Ascending aorta (tissue), 2 donors: ENCODE measurements at regions of chr3 and their contacts with region 1.

Region 1: GRCh38 chr3:161220850-161221753 is at the start of gene NMD3:
- DNase-seq: peak; percentile 75 to 96
- H3K4me3 ChIP-seq: peak within 1 kb of the TSS; percentile 87 to 92
- H3K27ac ChIP-seq: peak within 1 kb of the TSS; percentile 93 to 95
- H3K4me1 ChIP-seq: peaks cover 0 to 9% of the 10 kb centered on the region in 2 donors
- H3K27me3 ChIP-seq: no peaks in the 10 kb centered on the region
- CTCF ChIP-seq: no peak
- total RNA-seq, gene NMD3: 34.1 TPM

Region 2: DNA sequence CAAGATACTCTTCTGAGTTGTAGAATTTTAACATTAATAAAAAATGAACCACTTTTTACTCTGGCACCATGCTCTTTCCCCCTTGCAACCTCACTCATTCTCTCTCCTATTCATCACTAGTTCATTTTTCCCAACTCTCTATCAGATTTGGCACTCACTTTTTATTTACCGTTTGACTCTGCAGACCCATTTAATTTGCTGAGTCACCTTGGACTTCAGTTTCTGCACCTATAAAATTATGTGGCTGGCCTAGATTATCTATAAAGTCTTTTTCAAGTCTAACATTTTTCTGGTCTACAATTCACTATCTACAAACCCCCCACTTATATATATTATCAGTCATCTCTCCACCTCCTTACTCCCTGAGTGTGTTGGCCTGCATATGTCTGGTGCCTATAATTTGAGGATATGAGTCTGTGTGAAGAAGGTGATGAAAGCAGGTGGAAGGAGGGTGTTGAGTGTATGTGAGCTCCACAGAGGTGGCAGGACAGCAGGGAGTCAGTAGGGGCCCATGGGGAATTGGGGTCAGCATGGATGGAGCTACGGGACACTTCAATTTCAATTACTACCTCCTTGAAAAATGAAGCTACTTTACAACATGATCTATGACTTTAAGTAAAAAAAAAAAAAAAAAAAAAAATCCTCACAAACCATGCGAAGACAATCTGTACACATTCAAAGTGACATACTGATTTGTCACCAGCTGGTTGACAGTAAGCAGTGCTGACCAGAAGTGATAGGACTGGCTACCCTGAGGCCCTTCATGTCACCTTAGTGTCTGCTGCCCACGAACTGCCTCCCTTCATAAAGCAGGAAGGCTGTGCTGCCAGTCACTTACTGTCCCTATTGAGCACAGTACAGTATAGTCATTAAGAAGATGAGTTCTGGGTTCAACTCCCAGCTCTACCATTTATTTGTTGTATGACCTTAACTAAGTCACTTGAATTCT is 1566.6 kb before region 1 on chr3:
- intact Hi-C with region 1: no loop called
- DNase-seq: no peak
- H3K4me3 ChIP-seq: no peak overlapping the region
- H3K27ac ChIP-seq: no peak overlapping the region
- H3K4me1 ChIP-seq: no peaks in the 10 kb centered on the region
- H3K27me3 ChIP-seq: no peaks in the 10 kb centered on the region
- CTCF ChIP-seq: no peak

Region 3: DNA sequence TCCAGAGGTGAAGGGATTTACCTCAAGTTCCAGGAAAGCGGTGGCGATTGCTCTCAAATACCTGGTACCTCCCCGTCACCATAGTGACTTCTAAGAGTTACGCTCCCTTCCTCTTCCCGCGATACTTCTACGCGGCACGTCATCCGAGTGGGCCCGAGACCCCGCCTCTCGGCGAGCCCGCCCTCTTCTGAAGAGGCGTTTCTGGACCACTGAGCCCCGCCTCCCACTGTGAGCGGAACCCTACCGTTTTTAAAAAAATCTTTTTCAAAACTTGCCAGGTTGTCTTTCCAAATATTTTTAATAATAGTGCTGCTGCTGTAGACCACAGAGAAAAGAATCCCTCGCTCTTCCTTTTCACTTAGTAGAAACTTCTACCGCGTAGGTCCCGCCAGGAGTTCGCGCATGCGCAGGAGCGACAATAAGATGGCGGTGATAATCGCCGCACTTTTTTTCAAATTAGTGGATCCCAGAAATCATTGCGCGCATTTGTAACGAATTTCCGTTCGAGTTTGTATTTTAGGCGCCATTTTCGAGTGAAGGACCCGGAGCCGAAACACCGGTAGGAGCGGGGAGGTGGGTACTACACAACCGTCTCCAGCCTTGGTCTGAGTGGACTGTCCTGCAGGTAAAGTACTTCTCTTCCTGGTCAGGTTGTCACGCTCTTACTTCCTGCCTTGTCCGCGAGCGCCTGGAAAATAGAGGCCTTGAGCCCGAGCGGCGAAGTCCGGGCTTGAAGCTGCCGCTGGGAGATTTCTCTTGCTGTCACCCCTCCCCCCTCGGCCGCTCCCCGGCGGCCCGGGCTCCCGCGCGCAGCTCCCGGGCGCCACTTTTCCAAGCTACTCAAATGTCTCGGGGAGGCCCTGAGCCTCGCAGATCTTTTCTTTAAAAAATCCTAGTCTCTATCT is 821.7 kb before region 1 on chr3 and contains the starts of genes IFT80 and SMC4:
- intact Hi-C with region 1: loop called (anchors 5 kb)
- DNase-seq: peak; percentile 79 to 98
- H3K4me3 ChIP-seq: peak within 1 kb of the TSS; percentile 64 to 73
- H3K27ac ChIP-seq: peak within 1 kb of the TSS; percentile 84 to 87
- H3K4me1 ChIP-seq: peaks cover 0 to 8% of the 10 kb centered on the region in 2 donors
- H3K27me3 ChIP-seq: no peaks in the 10 kb centered on the region
- CTCF ChIP-seq: no peak
- total RNA-seq, gene IFT80: 10.2 TPM
- total RNA-seq, gene SMC4: 5.0 TPM

Region 4: DNA sequence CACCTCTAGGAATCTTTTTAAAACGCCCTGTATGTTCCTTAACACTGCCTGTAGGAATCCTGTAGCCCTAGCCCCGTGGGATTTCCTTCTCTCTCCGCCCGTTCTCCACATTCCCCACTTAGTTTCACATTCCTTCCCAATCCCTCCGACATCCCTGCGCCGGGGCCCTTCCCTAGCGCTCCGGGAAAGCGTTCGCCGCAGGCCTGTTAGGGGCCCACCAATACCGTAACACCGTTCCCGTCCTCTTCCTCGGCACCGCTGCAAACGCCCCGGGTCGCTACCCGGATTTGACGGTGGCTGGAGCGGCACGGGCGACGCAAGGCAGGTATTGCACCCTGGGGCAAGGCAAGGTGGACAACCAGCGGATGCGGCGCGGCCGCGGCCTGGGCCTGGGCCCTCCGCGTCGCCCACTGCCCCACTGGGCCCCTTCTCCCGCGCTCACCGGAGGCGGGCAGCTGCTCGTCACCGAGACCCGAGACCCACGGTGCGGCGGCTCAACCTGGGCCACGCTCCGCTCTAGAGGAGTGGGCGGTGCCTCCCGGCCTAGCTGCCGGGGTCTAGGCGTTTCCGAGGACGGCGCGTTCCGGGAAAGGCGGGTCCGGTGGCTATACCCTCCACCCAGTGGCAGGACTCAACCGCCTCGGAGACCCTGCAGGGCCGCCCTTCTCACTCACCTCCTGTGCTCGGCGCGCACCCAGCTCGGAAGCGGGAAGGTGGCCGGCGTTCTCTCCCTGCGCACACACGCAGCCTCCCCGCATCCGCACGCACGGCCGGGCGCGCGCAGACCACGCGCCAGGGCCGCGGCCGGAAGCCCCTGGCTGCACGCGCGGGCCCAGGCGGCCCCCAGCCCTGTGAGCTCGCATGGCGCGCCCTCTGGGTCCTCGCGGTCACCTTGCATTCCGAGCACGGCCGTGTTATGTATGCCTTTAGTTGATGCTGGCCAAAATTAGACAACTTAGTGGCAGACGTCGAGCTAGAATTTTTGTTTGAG is 116.2 kb before region 1 on chr3 and contains the start of gene B3GALNT1:
- intact Hi-C with region 1: loop called (anchors 2 kb)
- DNase-seq: peak in 1 of 2 donors; percentile 65
- H3K4me3 ChIP-seq: peak within 1 kb of the TSS; percentile 64 to 71
- H3K27ac ChIP-seq: peak within 1 kb of the TSS; percentile 70 to 78
- H3K4me1 ChIP-seq: peaks cover 0 to 8% of the 10 kb centered on the region in 2 donors
- H3K27me3 ChIP-seq: no peaks in the 10 kb centered on the region
- CTCF ChIP-seq: peak in 1 of 3 experiments; percentile 4
- total RNA-seq, gene B3GALNT1: 55.6 TPM

Region 5: DNA sequence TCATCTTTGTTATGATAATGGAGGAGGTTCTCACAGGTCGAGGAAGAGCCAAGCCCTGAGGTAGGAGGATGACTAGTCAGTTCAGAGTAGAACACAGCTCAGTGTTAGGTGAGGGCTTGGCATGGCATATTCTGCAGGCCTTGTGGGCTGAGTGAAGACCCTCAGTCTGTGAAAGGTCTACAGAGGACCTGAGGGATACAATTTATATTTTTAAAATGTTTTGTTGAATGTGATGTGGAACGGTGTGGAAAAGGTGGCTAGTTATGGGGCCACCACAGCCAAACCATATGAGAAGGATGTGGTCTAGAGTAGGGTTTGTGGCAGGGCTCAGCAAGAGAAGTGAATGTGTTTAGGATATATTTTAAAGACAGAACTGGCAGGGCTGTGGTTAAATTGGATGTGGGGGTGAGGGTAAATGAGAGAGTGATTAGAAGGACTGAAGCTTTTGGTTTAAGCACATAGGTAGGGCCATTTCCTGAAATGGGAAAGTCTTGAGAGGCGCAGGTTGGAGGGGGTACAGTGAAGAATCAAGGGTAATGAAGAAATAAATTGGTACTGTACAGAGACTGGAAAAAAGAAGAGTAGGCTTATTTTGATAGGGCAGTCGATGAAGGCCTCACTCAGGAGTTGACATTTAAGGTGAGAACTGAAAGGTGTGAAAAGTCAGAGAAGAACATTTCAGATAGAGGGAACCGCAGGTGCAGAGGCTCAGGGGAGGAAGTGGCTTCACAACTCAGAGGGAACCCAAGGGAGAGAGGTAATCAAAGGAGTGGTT is 89.7 kb after region 1 on chr3:
- intact Hi-C with region 1: no loop called
- DNase-seq: no peak
- H3K4me3 ChIP-seq: no peak overlapping the region
- H3K27ac ChIP-seq: no peak overlapping the region
- H3K4me1 ChIP-seq: no peaks in the 10 kb centered on the region
- H3K27me3 ChIP-seq: no peaks in the 10 kb centered on the region
- CTCF ChIP-seq: no peak

Region 6: DNA sequence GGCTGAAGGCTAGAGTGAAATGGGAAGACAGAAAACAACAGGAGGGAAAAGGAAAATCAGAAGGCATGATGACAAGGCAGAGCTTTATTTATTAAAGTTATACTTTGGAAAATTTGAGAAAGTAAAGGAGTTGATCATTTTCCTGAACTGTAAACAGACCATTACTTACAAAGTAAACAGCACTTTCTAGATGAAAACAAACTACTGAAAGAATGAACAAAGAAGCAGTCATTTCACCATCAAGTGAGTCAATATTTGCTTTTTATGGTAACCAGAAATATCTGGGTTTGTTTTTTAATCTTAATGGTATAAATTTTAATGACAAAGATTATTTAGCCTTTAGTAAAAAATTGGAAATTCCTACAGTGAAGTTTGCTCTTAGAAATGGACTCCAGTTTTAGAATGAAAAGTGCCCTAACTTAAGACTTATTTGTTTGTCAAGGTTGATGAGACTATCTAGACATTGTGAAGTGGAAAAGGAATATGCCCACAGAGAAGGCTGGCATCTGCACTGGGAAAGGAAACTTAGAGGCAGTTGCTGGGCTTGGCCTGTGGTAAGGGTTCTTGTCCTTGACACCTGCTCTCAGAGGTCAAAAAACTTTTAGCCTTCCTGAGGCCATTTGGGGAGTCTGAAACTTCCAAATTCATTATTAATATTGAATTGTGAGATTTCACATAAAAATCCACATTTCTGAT is 103.0 kb after region 1 on chr3:
- intact Hi-C with region 1: no loop called
- DNase-seq: no peak
- H3K4me3 ChIP-seq: no peak overlapping the region
- H3K27ac ChIP-seq: no peak overlapping the region
- H3K4me1 ChIP-seq: no peaks in the 10 kb centered on the region
- H3K27me3 ChIP-seq: no peaks in the 10 kb centered on the region
- CTCF ChIP-seq: no peak

Region 7: GRCh38 chr3:161415497-161416251 is 194.6 kb after region 1 on chr3:
- intact Hi-C with region 1: loop called (anchors 2 kb)
- DNase-seq: no peak
- H3K4me3 ChIP-seq: no peak overlapping the region
- H3K27ac ChIP-seq: peak overlapping the region; percentile 43 to 62
- H3K4me1 ChIP-seq: peaks cover 2 to 13% of the 10 kb centered on the region in 2 donors
- H3K27me3 ChIP-seq: no peaks in the 10 kb centered on the region
- CTCF ChIP-seq: no peak